HepG2 (cell line): ENCODE measurements at regions of chr15 and their contacts with region 1.

Region 1: DNA sequence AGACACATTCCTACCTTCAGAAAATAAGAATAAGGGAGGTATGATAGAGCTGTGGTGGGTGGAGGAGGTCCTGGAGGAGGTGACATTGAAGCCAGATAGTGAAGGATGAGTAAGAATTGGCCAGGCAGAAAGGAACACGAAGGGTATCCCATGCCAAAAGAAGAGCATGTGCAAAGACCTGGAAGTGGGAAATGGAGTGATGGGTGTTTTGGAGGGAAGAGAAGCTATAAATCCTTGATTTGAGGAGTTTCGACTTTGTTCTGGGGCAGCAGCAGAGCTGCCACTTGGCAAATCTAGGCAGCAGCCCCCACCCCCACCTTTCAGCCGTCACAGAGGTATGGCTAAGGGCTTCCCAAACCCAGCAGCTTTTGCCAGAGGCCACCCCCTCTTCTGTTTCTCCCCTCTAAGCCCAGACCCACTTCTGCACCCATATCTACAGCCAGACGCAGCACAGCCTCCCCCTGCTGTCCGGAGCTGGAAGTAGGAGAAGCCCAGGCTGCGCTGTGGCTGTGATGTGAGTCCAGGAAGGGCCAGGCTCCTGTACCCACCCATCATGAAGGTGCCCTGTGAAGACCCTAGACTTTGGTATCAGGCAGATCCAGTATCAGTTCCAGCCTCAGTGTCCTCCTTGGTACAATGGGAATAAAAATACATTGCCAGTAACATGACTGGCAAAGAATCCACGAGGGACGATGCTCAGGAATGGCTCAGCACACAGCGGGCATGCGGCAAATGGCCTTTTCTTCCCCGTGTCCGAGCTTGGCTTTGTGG is 188.7 kb upstream of the LINGO1 start:
- DNase-seq: peak; percentile 24
- ATAC-seq: peak; percentile 87
- H3K4me3 ChIP-seq: no peak overlapping the region
- H3K27ac ChIP-seq: no peak overlapping the region
- H3K4me1 ChIP-seq: no peaks in the 10 kb centered on the region
- H3K27me3 ChIP-seq: peaks cover 9 to 51% of the 10 kb centered on the region in 2 experiments
- CTCF ChIP-seq: peak; percentile 87
- EP300 ChIP-seq: no peak
- POLR2A ChIP-seq: no peak
- RAD21 ChIP-seq: peak; percentile 74; the same call in 1 of the 2 replicates

Region 2: DNA sequence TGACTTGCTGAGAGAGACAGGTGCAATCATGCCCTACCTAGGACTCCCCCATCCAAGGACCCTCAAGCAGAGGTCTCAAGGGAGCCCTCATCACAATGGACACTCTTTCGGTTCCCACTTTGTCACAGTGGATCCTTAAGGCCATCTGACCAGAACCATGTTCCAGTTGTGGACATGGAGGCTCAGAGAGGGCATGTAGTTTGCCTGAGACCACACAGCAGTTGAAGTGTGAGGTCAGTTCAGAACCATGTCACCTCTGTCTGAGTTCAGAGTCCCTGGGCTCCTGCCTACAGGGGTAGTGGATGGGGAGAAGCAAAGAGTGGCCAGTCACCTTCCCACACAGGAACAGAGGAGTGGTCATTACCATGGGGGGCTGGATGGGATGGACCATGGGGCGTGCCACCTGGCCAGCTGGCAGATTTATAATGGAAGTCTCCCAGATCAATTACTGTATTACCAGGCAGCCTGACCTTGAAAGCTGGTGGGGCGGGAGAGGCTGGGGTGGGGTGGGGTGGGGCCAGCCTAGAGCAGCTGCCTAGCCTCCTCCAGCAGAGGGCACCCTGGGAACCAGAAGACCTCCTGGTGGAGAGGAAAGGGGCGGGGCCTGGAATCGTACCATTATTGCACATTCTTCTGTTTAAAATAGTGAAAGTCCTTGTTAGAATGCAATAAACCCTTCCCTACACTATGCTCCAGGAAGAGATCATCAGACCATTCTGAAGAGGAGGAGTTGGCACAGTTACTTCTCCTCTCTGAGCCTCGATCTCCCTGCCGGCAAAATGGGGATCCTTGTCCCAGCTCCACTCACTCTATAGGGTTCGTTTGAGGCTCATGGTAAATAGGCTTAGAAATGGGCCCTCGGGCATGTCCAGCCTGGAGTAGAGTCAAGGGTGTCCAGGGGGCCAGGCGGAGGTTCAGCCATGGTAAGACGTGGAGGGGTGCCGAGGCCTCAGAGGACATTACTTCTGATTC is 161.7 kb before region 1 on chr15:
- CTCF ChIA-PET with region 1: interaction called, 6 read pairs
- POLR2A ChIA-PET with region 1: no interaction called
- in situ Hi-C with region 1: no loop called
- intact Hi-C with region 1: loop called (anchors 2 kb)
- DNase-seq: peak; percentile 74
- ATAC-seq: peak; percentile 70
- H3K4me3 ChIP-seq: no peak overlapping the region
- H3K27ac ChIP-seq: no peak overlapping the region
- H3K4me1 ChIP-seq: no peaks in the 10 kb centered on the region
- H3K27me3 ChIP-seq: peaks cover 3 to 14% of the 10 kb centered on the region in 2 experiments
- CTCF ChIP-seq: peak; percentile 51
- EP300 ChIP-seq: no peak
- POLR2A ChIP-seq: no peak
- RAD21 ChIP-seq: no peak

Region 3: GRCh38 chr15:77773906-77774305 is 47.5 kb before region 1 on chr15:
- CTCF ChIA-PET with region 1: no interaction called
- POLR2A ChIA-PET with region 1: no interaction called
- in situ Hi-C with region 1: no loop called
- intact Hi-C with region 1: no loop called
- DNase-seq: no peak
- ATAC-seq: no peak
- H3K4me3 ChIP-seq: no peak overlapping the region
- H3K27ac ChIP-seq: no peak overlapping the region
- H3K4me1 ChIP-seq: no peaks in the 10 kb centered on the region
- H3K27me3 ChIP-seq: peaks cover 4 to 5% of the 10 kb centered on the region in 2 experiments; a peak in 3 of 5 replicates
- CTCF ChIP-seq: no peak
- EP300 ChIP-seq: no peak
- POLR2A ChIP-seq: no peak
- RAD21 ChIP-seq: no peak